ENCODE measurements at regions of chr9 and their contacts with region 1.

Region 1: GRCh38 chr9:21395778-21396717 is 10.8 kb upstream of the IFNA2 start:
- DNase-seq: peak; percentile 32
- H3K4me3 ChIP-seq: no peak overlapping the region
- H3K27ac ChIP-seq: no peak overlapping the region
- H3K4me1 ChIP-seq: no peaks in the 10 kb centered on the region
- CTCF ChIP-seq: peak; percentile 82

Region 2: DNA sequence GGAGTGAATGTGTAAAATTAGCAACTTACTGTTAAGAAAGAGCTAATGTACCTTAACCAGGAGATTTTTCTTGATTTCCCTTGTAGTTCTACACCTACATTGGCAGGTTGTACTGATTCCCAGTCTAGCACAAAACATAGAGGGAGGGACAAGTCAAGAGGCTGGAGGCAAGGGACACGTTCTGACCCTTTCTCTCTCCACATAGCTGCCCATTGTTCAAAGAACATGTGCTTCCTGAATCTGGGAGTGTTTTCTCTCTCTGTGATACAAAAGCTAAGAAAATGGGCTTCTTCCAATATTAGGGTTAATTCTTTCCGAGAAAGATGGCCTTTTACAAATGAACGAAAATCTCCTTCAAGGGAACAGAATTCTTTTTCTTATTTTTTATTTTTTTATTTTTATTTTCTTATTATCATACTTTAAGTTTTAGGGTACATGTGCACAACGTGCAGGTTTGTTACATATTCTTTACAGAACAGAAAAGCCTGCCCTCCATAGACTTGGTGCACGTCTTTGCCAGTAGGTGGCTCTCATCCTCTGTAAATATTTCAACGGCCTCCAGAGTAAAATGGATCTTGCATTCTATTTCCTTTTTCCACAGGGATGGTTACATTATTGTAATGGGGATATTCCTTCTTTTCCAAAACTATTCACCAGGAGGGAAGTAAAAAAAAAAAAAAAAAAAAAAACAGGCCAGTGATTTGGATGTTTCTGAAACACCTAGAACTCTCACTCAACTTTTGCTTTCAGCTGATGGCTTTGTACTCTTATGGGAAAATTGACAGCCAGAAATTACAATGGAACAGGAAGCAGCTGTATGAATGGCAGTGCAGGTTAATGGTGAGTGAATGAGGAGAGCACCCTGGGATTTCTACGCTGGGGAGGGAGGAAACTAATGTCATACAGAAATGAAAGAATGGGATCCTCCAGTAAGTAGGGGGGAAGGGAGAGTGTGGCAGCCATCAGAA is 77.8 kb before region 1 on chr9:
- CTCF ChIA-PET with region 1: interaction called, 4 read pairs
- POLR2A ChIA-PET with region 1: interaction called, 5 read pairs
- intact Hi-C with region 1: loop called (anchors 1 kb)
- DNase-seq: peak; percentile 54
- H3K4me3 ChIP-seq: no peak overlapping the region
- H3K27ac ChIP-seq: no peak overlapping the region
- H3K4me1 ChIP-seq: no peaks in the 10 kb centered on the region
- CTCF ChIP-seq: peak; percentile 84

Region 3: DNA sequence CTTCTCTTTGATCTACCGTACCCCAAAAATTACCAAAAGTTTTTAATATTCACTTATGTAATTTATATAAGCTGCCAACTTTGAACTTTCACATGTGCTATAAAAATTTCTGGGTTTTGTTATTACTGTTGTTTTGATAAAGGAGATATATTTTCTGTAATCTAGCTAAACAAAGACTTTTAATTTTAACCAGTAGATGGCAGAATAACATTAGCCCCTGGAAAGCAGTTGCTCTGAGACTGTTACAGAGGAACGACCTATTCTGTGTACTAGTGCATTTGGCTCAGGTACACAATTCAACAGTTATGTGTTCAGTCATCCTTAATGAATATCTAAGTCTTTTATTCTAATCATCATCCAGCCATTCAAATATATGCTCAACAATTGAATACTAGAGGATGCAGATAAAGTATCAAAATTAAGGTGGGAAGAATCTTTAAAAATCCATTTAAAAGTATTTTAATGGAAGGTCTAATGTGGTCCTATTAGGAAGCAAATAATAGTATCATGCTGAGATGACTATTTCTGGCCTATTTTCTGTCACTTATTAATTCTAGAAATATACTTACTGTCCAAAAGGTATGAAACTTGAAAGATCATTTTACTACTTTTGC is 69.4 kb before region 1 on chr9:
- CTCF ChIA-PET with region 1: interaction called, 4 read pairs
- POLR2A ChIA-PET with region 1: interaction called, 3 read pairs
- intact Hi-C with region 1: loop called (anchors 1 kb)
- DNase-seq: peak; percentile 67
- H3K4me3 ChIP-seq: no peak overlapping the region
- H3K27ac ChIP-seq: no peak overlapping the region
- H3K4me1 ChIP-seq: peaks cover 8% of the 10 kb centered on the region
- CTCF ChIP-seq: peak; percentile 92

Measured in OCI-LY7 (cell line).